ENCODE measurements at regions of chr22 and their contacts with region 1.

Region 1: DNA sequence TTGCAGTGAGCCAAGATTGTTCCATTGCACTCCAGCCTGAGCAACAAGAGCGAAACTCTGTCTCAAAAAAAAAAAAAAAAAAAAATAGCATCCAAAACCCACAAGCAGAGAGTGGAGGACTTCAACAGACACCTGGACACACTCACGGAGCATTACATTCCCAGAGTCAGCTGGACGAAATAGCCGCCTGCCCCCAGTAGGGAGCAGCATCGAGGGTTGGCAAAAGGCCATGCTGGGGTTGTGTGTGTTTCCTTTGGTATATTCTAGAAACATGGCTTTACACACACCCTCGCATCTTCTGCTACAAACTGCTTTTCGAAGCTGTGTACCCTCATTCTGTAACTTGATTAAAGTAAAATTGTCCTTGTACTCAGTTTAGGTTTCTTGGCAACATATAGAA is 5.3 kb downstream of the ADA2 start:
- DNase-seq: peak; percentile 25 to 72 (median 53)
- ATAC-seq: peak; percentile 45
- H3K4me3 ChIP-seq: no peak overlapping the region
- H3K4me3 Mint-ChIP-seq: peak overlapping the region; percentile 22
- H3K27ac ChIP-seq: peak overlapping the region in 1 of 2 experiments; percentile 34
- H3K27ac Mint-ChIP-seq: peak overlapping the region; percentile 89
- H3K4me1 ChIP-seq: peaks cover 33% of the 10 kb centered on the region
- H3K4me1 Mint-ChIP-seq: peaks cover 61% of the 10 kb centered on the region
- H3K27me3 ChIP-seq: no peaks in the 10 kb centered on the region
- H3K27me3 Mint-ChIP-seq: no peaks in the 10 kb centered on the region
- CTCF ChIP-seq: peak; percentile 30

Region 2: GRCh38 chr22:17057959-17058814 is 155.8 kb before region 1 on chr22:
- CTCF ChIA-PET with region 1: no interaction called
- POLR2A ChIA-PET with region 1: no interaction called
- intact Hi-C with region 1: no loop called
- DNase-seq: peak in 7 of 9 experiments; percentile 25 to 65 (median 52)
- ATAC-seq: peak; percentile 62
- H3K4me3 ChIP-seq: no peak overlapping the region
- H3K4me3 Mint-ChIP-seq: no peak overlapping the region
- H3K27ac ChIP-seq: no peak overlapping the region
- H3K27ac Mint-ChIP-seq: no peak overlapping the region
- H3K4me1 ChIP-seq: peaks cover 3% of the 10 kb centered on the region
- H3K4me1 Mint-ChIP-seq: peaks cover 4% of the 10 kb centered on the region
- H3K27me3 ChIP-seq: no peaks in the 10 kb centered on the region
- H3K27me3 Mint-ChIP-seq: peaks cover 7% of the 10 kb centered on the region
- CTCF ChIP-seq: peak; percentile 96

Region 3: DNA sequence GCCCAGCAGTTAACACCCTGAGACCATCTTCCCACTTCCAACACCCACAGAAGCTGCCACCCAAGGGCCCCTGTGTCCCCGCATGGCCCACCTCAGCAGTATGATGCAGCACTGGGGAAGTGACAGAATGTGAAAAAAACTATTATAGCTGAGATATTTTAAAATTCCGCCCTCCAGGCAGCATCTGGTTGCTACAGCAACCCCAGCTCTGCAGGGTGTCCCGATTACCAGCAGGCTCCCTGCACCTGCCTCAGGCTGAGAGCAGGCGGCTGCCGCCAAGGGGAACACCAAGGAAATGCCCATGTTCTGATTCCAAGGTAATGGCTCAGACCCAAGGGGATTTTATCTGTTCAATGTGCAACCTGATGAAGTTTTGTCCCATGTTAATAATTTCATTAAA is 82.3 kb before region 1 on chr22:
- CTCF ChIA-PET with region 1: no interaction called
- POLR2A ChIA-PET with region 1: no interaction called
- intact Hi-C with region 1: no loop called
- DNase-seq: no peak
- ATAC-seq: no peak
- H3K4me3 ChIP-seq: no peak overlapping the region
- H3K4me3 Mint-ChIP-seq: no peak overlapping the region
- H3K27ac ChIP-seq: no peak overlapping the region
- H3K27ac Mint-ChIP-seq: no peak overlapping the region
- H3K4me1 ChIP-seq: no peaks in the 10 kb centered on the region
- H3K4me1 Mint-ChIP-seq: no peaks in the 10 kb centered on the region
- H3K27me3 ChIP-seq: no peaks in the 10 kb centered on the region
- H3K27me3 Mint-ChIP-seq: no peaks in the 10 kb centered on the region
- CTCF ChIP-seq: no peak

Region 4: GRCh38 chr22:17158568-17159503 is 55.1 kb before region 1 on chr22 and contains the start of gene HDHD5:
- CTCF ChIA-PET with region 1: no interaction called
- POLR2A ChIA-PET with region 1: interaction called, 5 read pairs
- intact Hi-C with region 1: loop called in 1 of 2 experiments (anchors 2 kb)
- DNase-seq: peak; percentile 78 to 93 (median 90)
- ATAC-seq: peak; percentile 92
- H3K4me3 ChIP-seq: peak within 1 kb of the TSS; percentile 80 to 89
- H3K4me3 Mint-ChIP-seq: peak within 1 kb of the TSS; percentile 86
- H3K27ac ChIP-seq: peak within 1 kb of the TSS; percentile 56 to 64
- H3K27ac Mint-ChIP-seq: peak within 1 kb of the TSS; percentile 55
- H3K4me1 ChIP-seq: peaks cover 27% of the 10 kb centered on the region
- H3K4me1 Mint-ChIP-seq: peaks cover 36% of the 10 kb centered on the region
- H3K27me3 ChIP-seq: no peaks in the 10 kb centered on the region
- H3K27me3 Mint-ChIP-seq: no peaks in the 10 kb centered on the region
- CTCF ChIP-seq: no peak
- total RNA-seq, gene HDHD5: 9.2 to 11.0 TPM

Region 5: GRCh38 chr22:17258015-17258787 is 44.2 kb after region 1 on chr22:
- CTCF ChIA-PET with region 1: no interaction called
- POLR2A ChIA-PET with region 1: interaction called, 3 read pairs
- intact Hi-C with region 1: loop called in 1 of 2 experiments (anchors 1 kb)
- DNase-seq: peak in 8 of 9 experiments; percentile 10 to 64 (median 44)
- ATAC-seq: peak; percentile 62
- H3K4me3 ChIP-seq: no peak overlapping the region
- H3K4me3 Mint-ChIP-seq: peak overlapping the region; percentile 35
- H3K27ac ChIP-seq: peak overlapping the region in 1 of 2 experiments; percentile 25
- H3K27ac Mint-ChIP-seq: peak overlapping the region; percentile 41
- H3K4me1 ChIP-seq: peaks cover 16% of the 10 kb centered on the region
- H3K4me1 Mint-ChIP-seq: peaks cover 19% of the 10 kb centered on the region
- H3K27me3 ChIP-seq: no peaks in the 10 kb centered on the region
- H3K27me3 Mint-ChIP-seq: no peaks in the 10 kb centered on the region
- CTCF ChIP-seq: no peak

Region 6: DNA sequence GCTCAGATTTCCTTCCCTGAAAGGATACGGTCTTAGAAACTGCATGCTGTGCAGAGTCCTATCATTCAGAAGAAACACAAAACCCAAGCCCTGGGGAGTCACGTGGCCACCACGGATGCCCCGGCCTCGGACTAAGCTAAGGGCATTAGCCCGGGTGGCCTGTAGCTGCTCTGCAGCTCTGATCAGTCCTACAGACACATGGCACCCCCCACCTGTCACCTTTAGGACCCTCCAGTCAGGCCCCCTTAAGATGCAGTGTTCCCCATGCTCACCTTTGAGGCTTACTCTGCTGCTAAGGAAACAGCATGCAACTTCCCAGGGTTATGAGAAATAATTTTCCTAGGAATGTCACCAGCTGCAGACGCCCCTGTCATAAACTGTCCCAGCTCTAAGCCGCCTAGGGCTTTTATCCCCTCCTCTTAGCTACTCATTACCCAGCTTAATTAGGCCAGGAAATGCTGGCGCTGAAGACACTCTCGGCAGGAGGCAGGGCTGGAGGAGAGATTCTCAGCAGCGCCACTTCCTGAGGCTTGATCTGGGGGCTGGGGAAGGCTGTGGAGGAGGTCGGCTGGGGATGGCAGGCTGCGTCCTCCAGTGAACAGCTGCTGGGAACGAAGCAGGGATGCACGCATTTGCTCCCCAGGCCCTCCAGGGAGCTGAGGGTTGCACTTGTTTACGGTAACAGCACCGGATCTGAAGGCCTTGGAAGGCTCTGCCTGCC is 52.4 kb after region 1 on chr22:
- CTCF ChIA-PET with region 1: no interaction called
- POLR2A ChIA-PET with region 1: interaction called, 7 read pairs
- intact Hi-C with region 1: loop called in 1 of 2 experiments (anchors 5 kb)
- DNase-seq: peak in 4 of 9 experiments; percentile 15 to 50 (median 26)
- ATAC-seq: no peak
- H3K4me3 ChIP-seq: no peak overlapping the region
- H3K4me3 Mint-ChIP-seq: peak overlapping the region; percentile 3
- H3K27ac ChIP-seq: no peak overlapping the region
- H3K27ac Mint-ChIP-seq: peak overlapping the region; percentile 18
- H3K4me1 ChIP-seq: peaks cover 7% of the 10 kb centered on the region
- H3K4me1 Mint-ChIP-seq: peaks cover 12% of the 10 kb centered on the region
- H3K27me3 ChIP-seq: no peaks in the 10 kb centered on the region
- H3K27me3 Mint-ChIP-seq: no peaks in the 10 kb centered on the region
- CTCF ChIP-seq: no peak

Region 7: GRCh38 chr22:17368554-17369438 is 154.8 kb after region 1 on chr22:
- CTCF ChIA-PET with region 1: no interaction called
- POLR2A ChIA-PET with region 1: no interaction called
- intact Hi-C with region 1: loop called (anchors 5 to 10 kb)
- DNase-seq: peak in 3 of 9 experiments; percentile 6 to 24 (median 18)
- ATAC-seq: peak; percentile 29
- H3K4me3 ChIP-seq: peak overlapping the region; percentile 24 to 42
- H3K4me3 Mint-ChIP-seq: peak overlapping the region; percentile 76
- H3K27ac ChIP-seq: no peak overlapping the region
- H3K27ac Mint-ChIP-seq: no peak overlapping the region
- H3K4me1 ChIP-seq: peaks cover 25% of the 10 kb centered on the region
- H3K4me1 Mint-ChIP-seq: peaks cover 27% of the 10 kb centered on the region
- H3K27me3 ChIP-seq: peaks cover 27 to 33% of the 10 kb centered on the region in 2 experiments
- H3K27me3 Mint-ChIP-seq: peaks cover 56% of the 10 kb centered on the region
- CTCF ChIP-seq: no peak

Region 8: GRCh38 chr22:17501679-17502285 is 287.8 kb after region 1 on chr22:
- CTCF ChIA-PET with region 1: interaction called, 3 read pairs
- POLR2A ChIA-PET with region 1: no interaction called
- intact Hi-C with region 1: loop called in 1 of 2 experiments (anchors 1 kb)
- DNase-seq: peak in 3 of 9 experiments; percentile 30 to 77 (median 64)
- ATAC-seq: peak; percentile 73
- H3K4me3 ChIP-seq: no peak overlapping the region
- H3K4me3 Mint-ChIP-seq: no peak overlapping the region
- H3K27ac ChIP-seq: no peak overlapping the region
- H3K27ac Mint-ChIP-seq: no peak overlapping the region
- H3K4me1 ChIP-seq: no peaks in the 10 kb centered on the region
- H3K4me1 Mint-ChIP-seq: peaks cover 2% of the 10 kb centered on the region
- H3K27me3 ChIP-seq: no peaks in the 10 kb centered on the region
- H3K27me3 Mint-ChIP-seq: peaks cover 8% of the 10 kb centered on the region
- CTCF ChIP-seq: peak; percentile 70

Region 9: DNA sequence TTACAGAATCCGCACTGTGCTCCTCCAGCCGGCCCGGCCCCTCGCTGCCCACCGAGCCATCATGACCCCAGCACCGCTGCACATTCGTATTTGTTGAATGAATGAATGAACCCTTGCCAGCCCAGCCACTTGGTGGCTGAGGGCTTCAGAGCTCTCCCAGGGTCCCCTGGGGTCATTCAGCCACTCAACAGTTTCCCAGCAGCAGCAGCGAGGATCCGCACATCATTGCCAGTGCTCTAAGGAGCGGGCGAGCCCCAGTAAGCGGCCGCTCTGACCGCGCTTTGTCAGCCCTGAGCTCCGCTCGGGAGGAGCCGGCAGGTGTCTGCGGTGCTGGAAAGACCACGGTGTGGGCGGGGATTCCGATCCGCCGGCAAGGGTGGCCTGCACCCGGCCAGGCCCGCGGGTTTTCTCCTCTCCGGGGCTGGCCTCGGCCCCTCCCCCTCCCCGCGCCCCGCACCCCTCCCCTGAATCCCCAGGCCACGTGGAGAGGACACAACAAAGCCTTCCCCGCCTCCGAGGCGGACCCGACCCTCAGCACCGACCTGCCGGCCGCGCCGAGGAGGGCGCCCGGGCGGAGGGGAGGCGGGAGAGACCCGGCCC is 559.7 kb after region 1 on chr22:
- CTCF ChIA-PET with region 1: no interaction called
- POLR2A ChIA-PET with region 1: no interaction called
- intact Hi-C with region 1: loop called in 1 of 2 experiments (anchors 5 kb)
- DNase-seq: peak; percentile 26 to 84 (median 68)
- ATAC-seq: peak; percentile 47
- H3K4me3 ChIP-seq: peak overlapping the region; percentile 65
- H3K4me3 Mint-ChIP-seq: peak overlapping the region; percentile 90
- H3K27ac ChIP-seq: peak overlapping the region; percentile 19 to 36
- H3K27ac Mint-ChIP-seq: peak overlapping the region; percentile 90
- H3K4me1 ChIP-seq: peaks cover 76% of the 10 kb centered on the region
- H3K4me1 Mint-ChIP-seq: peaks cover 78% of the 10 kb centered on the region
- H3K27me3 ChIP-seq: no peaks in the 10 kb centered on the region
- H3K27me3 Mint-ChIP-seq: no peaks in the 10 kb centered on the region
- CTCF ChIP-seq: no peak

Measured in CD8-positive, alpha-beta T cell (primary cell).